CD8-positive, alpha-beta T cell (primary cell): ENCODE measurements at regions of chr14 and their contacts with region 1.

Region 1: DNA sequence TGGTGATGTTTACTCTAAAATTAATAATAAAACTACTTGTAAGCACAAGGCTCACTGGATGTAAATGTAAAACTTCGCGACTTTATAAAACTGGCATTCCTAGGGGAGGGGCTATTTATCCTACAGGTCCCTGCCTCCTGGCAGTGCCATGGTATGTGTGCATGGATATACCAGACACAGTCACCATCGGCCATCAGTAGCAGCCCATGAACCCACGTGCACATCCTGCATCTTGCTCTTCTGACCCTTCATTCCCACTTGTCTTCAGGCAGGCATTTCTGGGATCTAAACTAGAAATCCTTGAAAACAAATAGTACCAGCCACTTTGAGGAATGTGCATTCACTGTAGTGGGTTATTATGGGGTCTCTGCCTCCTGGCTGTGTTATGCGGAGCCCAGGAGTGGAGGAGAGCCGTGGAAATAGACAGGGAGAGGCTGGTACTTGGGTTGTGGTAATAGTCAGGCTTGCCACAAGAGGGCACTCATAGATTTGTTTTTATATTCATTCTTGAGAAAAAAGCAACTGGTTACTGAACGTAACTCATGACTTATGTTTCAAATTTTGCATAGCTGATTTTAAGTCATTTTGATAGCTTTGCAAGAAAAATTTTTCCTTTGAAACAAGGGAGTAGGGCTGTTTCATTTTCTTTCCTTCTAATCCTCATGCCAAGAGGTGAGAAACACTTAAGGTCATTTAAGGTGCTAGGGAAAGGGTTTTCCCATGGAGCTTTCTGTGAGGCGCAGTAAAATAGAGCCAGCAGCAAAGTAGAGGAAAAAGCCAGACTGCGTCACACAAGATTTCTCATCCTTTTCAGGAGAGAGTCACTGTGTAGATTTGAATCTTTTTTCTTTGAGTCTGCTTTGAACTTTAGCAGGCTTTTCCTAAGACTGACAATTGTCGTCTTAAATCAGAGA is 17.4 kb upstream of the GALNT16 start:
- DNase-seq: peak; percentile 15 to 71 (median 47)
- ATAC-seq: peak; percentile 69
- H3K4me3 ChIP-seq: no peak overlapping the region
- H3K4me3 Mint-ChIP-seq: no peak overlapping the region
- H3K27ac ChIP-seq: no peak overlapping the region
- H3K27ac Mint-ChIP-seq: no peak overlapping the region
- H3K4me1 ChIP-seq: no peaks in the 10 kb centered on the region
- H3K4me1 Mint-ChIP-seq: peaks cover 3% of the 10 kb centered on the region
- H3K27me3 ChIP-seq: no peaks in the 10 kb centered on the region
- H3K27me3 Mint-ChIP-seq: no peaks in the 10 kb centered on the region
- CTCF ChIP-seq: peak; percentile 86

Region 2: DNA sequence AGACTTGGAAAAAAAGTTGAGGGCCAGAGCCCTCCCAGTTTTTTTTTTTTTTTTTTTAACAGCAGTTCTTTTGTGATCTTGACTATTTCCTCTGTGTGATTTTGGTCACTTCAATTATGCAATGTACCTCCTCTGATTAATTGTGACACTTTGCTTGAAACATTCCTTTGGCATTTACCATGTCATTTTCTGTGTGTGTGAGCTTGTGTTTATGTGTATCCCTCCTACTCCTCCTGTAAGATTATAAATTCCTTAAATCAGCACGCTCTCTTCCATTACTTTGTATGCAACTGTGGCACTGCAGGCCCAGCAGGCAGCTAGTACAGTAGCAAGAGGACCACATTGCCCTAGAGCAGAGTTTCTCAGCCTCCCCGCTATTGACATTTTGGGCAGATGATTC is 15.8 kb before region 1 on chr14:
- CTCF ChIA-PET with region 1: interaction called, 18 read pairs
- POLR2A ChIA-PET with region 1: no interaction called
- intact Hi-C with region 1: no loop called
- DNase-seq: no peak
- ATAC-seq: no peak
- H3K4me3 ChIP-seq: no peak overlapping the region
- H3K4me3 Mint-ChIP-seq: no peak overlapping the region
- H3K27ac ChIP-seq: no peak overlapping the region
- H3K27ac Mint-ChIP-seq: no peak overlapping the region
- H3K4me1 ChIP-seq: no peaks in the 10 kb centered on the region
- H3K4me1 Mint-ChIP-seq: no peaks in the 10 kb centered on the region
- H3K27me3 ChIP-seq: no peaks in the 10 kb centered on the region
- H3K27me3 Mint-ChIP-seq: no peaks in the 10 kb centered on the region
- CTCF ChIP-seq: no peak

Region 3: DNA sequence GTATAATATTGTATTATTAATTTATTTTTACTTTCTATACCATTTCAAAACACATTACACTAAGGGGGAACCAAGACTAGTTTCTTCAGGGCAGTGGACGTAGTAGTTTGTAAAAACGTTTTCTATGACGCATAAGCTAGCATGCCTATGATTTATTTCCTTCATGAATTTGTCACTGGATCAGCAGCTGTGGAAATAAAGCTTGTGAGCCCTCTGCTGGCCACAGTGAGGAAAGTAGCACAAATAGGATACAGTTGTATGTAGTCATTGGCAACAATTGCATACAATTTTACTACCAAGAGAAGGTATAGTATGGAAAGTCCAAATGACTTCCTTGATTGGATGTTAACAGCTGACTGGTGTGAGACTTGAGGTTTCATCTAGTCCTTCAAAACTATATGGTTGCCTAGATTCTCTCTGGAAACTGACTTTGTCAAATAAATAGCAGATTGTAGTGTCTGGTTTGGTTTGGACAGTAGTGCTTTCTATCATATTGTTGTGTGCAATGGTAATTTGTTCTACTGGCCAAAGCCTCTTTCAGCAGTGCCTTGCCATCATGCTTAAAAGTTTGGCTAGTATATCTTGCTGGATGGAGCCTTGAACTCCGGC is 217.6 kb after region 1 on chr14:
- CTCF ChIA-PET with region 1: interaction called, 43 read pairs
- POLR2A ChIA-PET with region 1: no interaction called
- intact Hi-C with region 1: loop called (anchors 1 kb)
- DNase-seq: peak; percentile 7 to 70 (median 42)
- ATAC-seq: peak; percentile 73
- H3K4me3 ChIP-seq: no peak overlapping the region
- H3K4me3 Mint-ChIP-seq: no peak overlapping the region
- H3K27ac ChIP-seq: no peak overlapping the region
- H3K27ac Mint-ChIP-seq: no peak overlapping the region
- H3K4me1 ChIP-seq: no peaks in the 10 kb centered on the region
- H3K4me1 Mint-ChIP-seq: no peaks in the 10 kb centered on the region
- H3K27me3 ChIP-seq: no peaks in the 10 kb centered on the region
- H3K27me3 Mint-ChIP-seq: no peaks in the 10 kb centered on the region
- CTCF ChIP-seq: peak; percentile 72